PC-3 (cell line): ENCODE measurements at regions of chr7 and their contacts with region 1.

Region 1: GRCh38 chr7:30164567-30164966 is 29.8 kb downstream of the MTURN start:
- DNase-seq: peak; percentile 76
- ATAC-seq: peak; percentile 42; the same call in 1 of the 2 replicates
- H3K4me3 ChIP-seq: no peak overlapping the region
- H3K27ac ChIP-seq: no peak overlapping the region
- H3K4me1 ChIP-seq: peaks cover 58% of the 10 kb centered on the region
- H3K27me3 ChIP-seq: no peaks in the 10 kb centered on the region
- CTCF ChIP-seq: peak; percentile 80

Region 2: GRCh38 chr7:30142710-30143109 is 21.9 kb before region 1 on chr7:
- CTCF ChIA-PET with region 1: no interaction called
- POLR2A ChIA-PET with region 1: no interaction called
- intact Hi-C with region 1: loop called (anchors 1 kb)
- DNase-seq: peak; percentile 93
- ATAC-seq: peak; percentile 76
- H3K4me3 ChIP-seq: peak overlapping the region; percentile 49
- H3K27ac ChIP-seq: peak overlapping the region; percentile 68
- H3K4me1 ChIP-seq: peaks cover 33% of the 10 kb centered on the region
- H3K27me3 ChIP-seq: no peaks in the 10 kb centered on the region
- CTCF ChIP-seq: no peak

Region 3: GRCh38 chr7:30276203-30276900 is 111.8 kb after region 1 on chr7:
- CTCF ChIA-PET with region 1: interaction called, 13 read pairs
- POLR2A ChIA-PET with region 1: interaction called, 3 read pairs
- intact Hi-C with region 1: loop called (anchors 2 kb)
- DNase-seq: peak; percentile 82
- ATAC-seq: peak; percentile 93
- H3K4me3 ChIP-seq: no peak overlapping the region
- H3K27ac ChIP-seq: no peak overlapping the region
- H3K4me1 ChIP-seq: no peaks in the 10 kb centered on the region
- H3K27me3 ChIP-seq: no peaks in the 10 kb centered on the region
- CTCF ChIP-seq: peak; percentile 87

Region 4: DNA sequence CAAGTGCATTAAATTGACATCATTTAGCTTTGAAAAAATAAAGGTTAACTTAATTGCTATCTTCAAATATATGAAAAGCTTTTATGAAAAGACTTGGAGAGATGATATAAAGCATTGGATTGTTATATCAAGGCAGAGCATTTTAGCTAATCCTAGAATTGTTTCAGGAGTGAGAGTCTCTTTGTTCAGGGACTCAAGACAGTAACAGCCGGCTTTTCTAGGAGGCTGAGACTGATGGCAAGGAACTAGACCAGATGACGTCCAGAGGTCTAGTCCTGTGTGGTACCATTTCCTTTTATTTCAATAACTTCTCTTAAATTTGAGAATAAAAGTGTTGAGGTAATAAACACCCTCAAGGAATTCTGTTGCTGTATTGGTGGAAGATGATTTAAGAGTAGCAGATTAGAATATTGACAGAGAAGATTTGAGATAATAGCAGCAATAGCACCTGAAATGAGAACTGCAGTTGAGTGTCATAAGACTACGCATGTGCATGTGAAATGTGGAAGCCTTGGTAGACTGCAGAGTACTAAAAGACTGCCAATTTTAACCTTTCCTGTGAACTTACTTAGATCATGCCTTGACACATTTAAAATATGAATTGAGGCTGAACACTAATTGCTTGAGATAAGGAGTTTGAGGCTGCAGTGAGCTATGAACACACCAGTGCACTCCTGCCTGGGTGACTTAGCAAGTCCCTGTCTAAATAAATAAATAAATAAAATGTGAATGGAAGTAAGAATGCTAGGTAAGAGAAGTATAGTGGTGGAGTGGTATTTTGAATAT is 199.4 kb after region 1 on chr7:
- CTCF ChIA-PET with region 1: no interaction called
- POLR2A ChIA-PET with region 1: no interaction called
- intact Hi-C with region 1: no loop called
- DNase-seq: no peak
- ATAC-seq: no peak
- H3K4me3 ChIP-seq: no peak overlapping the region
- H3K27ac ChIP-seq: no peak overlapping the region
- H3K4me1 ChIP-seq: peaks cover 10% of the 10 kb centered on the region; the same call in 1 of the 2 replicates
- H3K27me3 ChIP-seq: no peaks in the 10 kb centered on the region
- CTCF ChIP-seq: no peak

Region 5: GRCh38 chr7:30412810-30413504 is 248.4 kb after region 1 on chr7:
- CTCF ChIA-PET with region 1: interaction called, 3 read pairs
- POLR2A ChIA-PET with region 1: no interaction called
- intact Hi-C with region 1: loop called (anchors 1 kb)
- DNase-seq: peak; percentile 85
- ATAC-seq: peak; percentile 95
- H3K4me3 ChIP-seq: no peak overlapping the region
- H3K27ac ChIP-seq: no peak overlapping the region
- H3K4me1 ChIP-seq: no peaks in the 10 kb centered on the region
- H3K27me3 ChIP-seq: no peaks in the 10 kb centered on the region
- CTCF ChIP-seq: peak; percentile 83

Region 6: GRCh38 chr7:30564243-30564892 is 399.8 kb after region 1 on chr7:
- CTCF ChIA-PET with region 1: interaction called, 3 read pairs
- POLR2A ChIA-PET with region 1: no interaction called
- intact Hi-C with region 1: loop called (anchors 5 kb)
- DNase-seq: peak; percentile 88
- ATAC-seq: peak; percentile 75
- H3K4me3 ChIP-seq: no peak overlapping the region
- H3K27ac ChIP-seq: peak overlapping the region; percentile 94
- H3K4me1 ChIP-seq: peaks cover 34% of the 10 kb centered on the region
- H3K27me3 ChIP-seq: no peaks in the 10 kb centered on the region
- CTCF ChIP-seq: peak; percentile 90